ENCODE measurements at regions of chr6 and their contacts with region 1.

Region 1: GRCh38 chr6:136226027-136226673 is 24.0 kb downstream of the MTFR2 start:
- DNase-seq: peak in 4 of 5 donors; percentile 53 to 57 (median 55)
- H3K4me3 ChIP-seq: peak overlapping the region in 1 of 2 donors; percentile 29
- H3K4me3 Mint-ChIP-seq: peak overlapping the region in 7 of 8 donors; percentile 49 to 77 (median 66)
- H3K27ac ChIP-seq: no peak overlapping the region
- H3K27ac Mint-ChIP-seq: peak overlapping the region in 2 of 7 donors; percentile 2 to 72
- H3K4me1 ChIP-seq: no peaks in the 10 kb centered on the region
- H3K4me1 Mint-ChIP-seq: peaks cover 3 to 10% (median 4%) of the 10 kb centered on the region in 4 donors
- H3K27me3 ChIP-seq: no peaks in the 10 kb centered on the region
- H3K27me3 Mint-ChIP-seq: no peaks in the 10 kb centered on the region

Region 2: DNA sequence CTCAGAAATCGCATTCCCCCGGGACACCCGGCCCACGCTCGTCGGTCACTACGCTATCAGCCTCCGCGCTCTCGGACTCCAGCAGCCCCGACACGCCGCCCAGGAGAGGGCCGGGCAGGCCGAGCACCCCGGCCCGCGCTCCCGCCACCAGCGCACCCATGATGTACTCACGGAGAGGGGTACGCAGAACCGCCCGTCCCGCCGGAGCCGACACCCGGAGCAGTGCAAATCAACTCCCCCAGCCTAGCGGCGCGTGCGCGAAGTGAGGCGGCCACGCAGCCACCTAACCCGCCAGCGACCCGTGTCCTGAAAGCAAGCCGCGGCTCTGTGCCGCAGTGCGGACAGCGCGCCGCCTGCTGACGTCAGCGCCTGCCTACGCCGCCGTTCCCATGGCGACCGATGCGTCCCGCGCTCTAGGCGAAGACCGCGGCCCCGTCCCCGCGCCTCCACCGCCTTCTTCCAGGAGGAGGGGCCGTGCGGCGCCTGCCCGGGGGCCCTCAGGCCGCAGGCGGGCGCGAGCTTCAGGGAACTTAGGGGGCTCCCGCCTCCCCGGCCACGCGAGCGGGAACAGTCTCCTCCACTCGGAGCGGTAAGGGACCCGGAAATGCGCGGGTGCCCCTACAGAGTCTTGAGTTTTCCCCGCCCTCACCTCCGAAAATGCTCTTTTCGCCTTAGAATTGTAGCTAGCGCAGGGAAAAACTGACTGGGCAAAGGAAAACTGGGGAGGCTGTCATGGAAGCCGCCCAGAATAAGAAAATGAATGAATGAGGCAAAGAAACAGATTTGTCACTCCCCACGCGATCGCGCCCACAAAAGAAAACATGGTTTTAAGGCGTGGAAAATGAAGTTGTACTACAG is 728.5 kb before region 1 on chr6 and contains the start of gene AHI1:
- CTCF ChIA-PET with region 1: interaction called, 24 read pairs
- POLR2A ChIA-PET with region 1: no interaction called
- intact Hi-C with region 1: no loop called
- DNase-seq: peak; percentile 86 to 92 (median 89)
- H3K4me3 ChIP-seq: peak within 1 kb of the TSS; percentile 32 to 97
- H3K4me3 Mint-ChIP-seq: peak within 1 kb of the TSS in 3 of 8 donors; percentile 29 to 95 (median 59)
- H3K27ac ChIP-seq: peak within 1 kb of the TSS; percentile 87
- H3K27ac Mint-ChIP-seq: peak within 1 kb of the TSS in 3 of 7 donors; percentile 21 to 69 (median 28)
- H3K4me1 ChIP-seq: peaks cover 15% of the 10 kb centered on the region
- H3K4me1 Mint-ChIP-seq: peaks cover 5 to 9% (median 6%) of the 10 kb centered on the region in 4 donors
- H3K27me3 ChIP-seq: no peaks in the 10 kb centered on the region
- H3K27me3 Mint-ChIP-seq: no peaks in the 10 kb centered on the region
- total RNA-seq, gene AHI1: 12.2 to 12.8 TPM

Region 3: GRCh38 chr6:135535989-135536414 is 690.1 kb before region 1 on chr6:
- CTCF ChIA-PET with region 1: interaction called, 55 read pairs
- POLR2A ChIA-PET with region 1: interaction called, 3 read pairs
- intact Hi-C with region 1: loop called (anchors 1 kb)
- DNase-seq: peak in 4 of 5 donors; percentile 38 to 47 (median 40)
- H3K4me3 ChIP-seq: no peak overlapping the region
- H3K4me3 Mint-ChIP-seq: peak overlapping the region in 5 of 8 donors; percentile 24 to 57 (median 35)
- H3K27ac ChIP-seq: no peak overlapping the region
- H3K27ac Mint-ChIP-seq: peak overlapping the region in 1 of 7 donors; percentile 2
- H3K4me1 ChIP-seq: no peaks in the 10 kb centered on the region
- H3K4me1 Mint-ChIP-seq: peaks cover 2 to 6% (median 4%) of the 10 kb centered on the region in 4 donors
- H3K27me3 ChIP-seq: no peaks in the 10 kb centered on the region
- H3K27me3 Mint-ChIP-seq: peaks cover 0 to 7% of the 10 kb centered on the region in 2 donors

Region 4: GRCh38 chr6:136031982-136032381 is 194.2 kb before region 1 on chr6:
- CTCF ChIA-PET with region 1: interaction called, 4 read pairs
- POLR2A ChIA-PET with region 1: no interaction called
- intact Hi-C with region 1: loop called (anchors 1 kb)
- DNase-seq: no peak
- H3K4me3 ChIP-seq: no peak overlapping the region
- H3K4me3 Mint-ChIP-seq: no peak overlapping the region
- H3K27ac ChIP-seq: no peak overlapping the region
- H3K27ac Mint-ChIP-seq: no peak overlapping the region
- H3K4me1 ChIP-seq: no peaks in the 10 kb centered on the region
- H3K4me1 Mint-ChIP-seq: no peaks in the 10 kb centered on the region
- H3K27me3 ChIP-seq: no peaks in the 10 kb centered on the region
- H3K27me3 Mint-ChIP-seq: peaks cover 0 to 5% of the 10 kb centered on the region in 2 donors

Region 5: GRCh38 chr6:136095986-136096385 is 130.2 kb before region 1 on chr6:
- CTCF ChIA-PET with region 1: no interaction called
- POLR2A ChIA-PET with region 1: no interaction called
- intact Hi-C with region 1: no loop called
- DNase-seq: no peak
- H3K4me3 ChIP-seq: no peak overlapping the region
- H3K4me3 Mint-ChIP-seq: no peak overlapping the region
- H3K27ac ChIP-seq: no peak overlapping the region
- H3K27ac Mint-ChIP-seq: no peak overlapping the region
- H3K4me1 ChIP-seq: no peaks in the 10 kb centered on the region
- H3K4me1 Mint-ChIP-seq: no peaks in the 10 kb centered on the region
- H3K27me3 ChIP-seq: no peaks in the 10 kb centered on the region
- H3K27me3 Mint-ChIP-seq: peaks cover 0 to 1% of the 10 kb centered on the region in 2 donors

Region 6: GRCh38 chr6:136249811-136250685 is 23.9 kb after region 1 on chr6 and contains the start of gene MTFR2:
- CTCF ChIA-PET with region 1: interaction called, 15 read pairs
- POLR2A ChIA-PET with region 1: no interaction called
- intact Hi-C with region 1: no loop called
- DNase-seq: peak; percentile 94 to 98 (median 96)
- H3K4me3 ChIP-seq: peak within 1 kb of the TSS; percentile 82 to 83
- H3K4me3 Mint-ChIP-seq: peak within 1 kb of the TSS; percentile 91 to 99 (median 96)
- H3K27ac ChIP-seq: peak within 1 kb of the TSS; percentile 57
- H3K27ac Mint-ChIP-seq: peak within 1 kb of the TSS; percentile 74 to 96 (median 88)
- H3K4me1 ChIP-seq: peaks cover 21% of the 10 kb centered on the region
- H3K4me1 Mint-ChIP-seq: peaks cover 24 to 43% (median 34%) of the 10 kb centered on the region in 4 donors
- H3K27me3 ChIP-seq: no peaks in the 10 kb centered on the region
- H3K27me3 Mint-ChIP-seq: no peaks in the 10 kb centered on the region
- total RNA-seq, gene MTFR2: 1.2 TPM

Measured in CD4-positive, alpha-beta memory T cell (primary cell).